Common myeloid progenitor, CD34-positive (primary cell): ENCODE measurements at regions of chr20 and their contacts with region 1.

Region 1: GRCh38 chr20:50980851-50981713 is 22.5 kb downstream of the MOCS3 start:
- DNase-seq: peak; percentile 66 to 77 (median 75)
- H3K4me3 ChIP-seq: peak overlapping the region in 1 of 7 experiments; percentile 57
- H3K27ac ChIP-seq: no peak overlapping the region
- H3K4me1 ChIP-seq: peaks cover 0 to 4% (median 0%) of the 10 kb centered on the region in 4 experiments
- H3K27me3 ChIP-seq: peaks cover 0 to 15% (median 7%) of the 10 kb centered on the region in 5 experiments

Region 2: DNA sequence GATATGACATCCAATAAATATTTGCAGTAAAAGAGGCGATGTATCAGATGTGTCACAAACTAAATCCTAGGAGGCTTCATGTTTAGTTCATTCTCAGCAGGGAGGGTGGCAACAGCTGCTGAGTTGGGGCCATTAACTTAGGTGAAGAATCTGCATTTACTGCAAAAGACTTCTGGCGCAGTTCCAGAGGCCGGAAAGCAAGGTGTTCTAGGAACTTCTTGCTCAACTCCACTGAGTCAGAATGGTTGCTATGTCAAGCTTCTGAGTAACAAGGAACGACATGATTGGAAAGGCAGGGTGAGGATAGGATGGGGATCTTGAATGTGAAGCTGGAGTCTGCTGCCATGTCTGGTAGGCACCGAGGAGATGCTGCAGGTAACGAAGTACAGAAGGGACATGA is 61.5 kb before region 1 on chr20:
- CTCF ChIA-PET with region 1: no interaction called
- POLR2A ChIA-PET with region 1: no interaction called
- DNase-seq: no peak
- H3K4me3 ChIP-seq: no peak overlapping the region
- H3K27ac ChIP-seq: no peak overlapping the region
- H3K4me1 ChIP-seq: peaks cover 5 to 39% (median 13%) of the 10 kb centered on the region in 4 experiments
- H3K27me3 ChIP-seq: no peaks in the 10 kb centered on the region

Region 3: GRCh38 chr20:50967586-50967985 is 13.5 kb before region 1 on chr20:
- CTCF ChIA-PET with region 1: interaction called, 12 read pairs
- POLR2A ChIA-PET with region 1: no interaction called
- DNase-seq: no peak
- H3K4me3 ChIP-seq: no peak overlapping the region
- H3K27ac ChIP-seq: no peak overlapping the region
- H3K4me1 ChIP-seq: no peaks in the 10 kb centered on the region
- H3K27me3 ChIP-seq: peaks cover 0 to 11% (median 4%) of the 10 kb centered on the region in 5 experiments

Region 4: DNA sequence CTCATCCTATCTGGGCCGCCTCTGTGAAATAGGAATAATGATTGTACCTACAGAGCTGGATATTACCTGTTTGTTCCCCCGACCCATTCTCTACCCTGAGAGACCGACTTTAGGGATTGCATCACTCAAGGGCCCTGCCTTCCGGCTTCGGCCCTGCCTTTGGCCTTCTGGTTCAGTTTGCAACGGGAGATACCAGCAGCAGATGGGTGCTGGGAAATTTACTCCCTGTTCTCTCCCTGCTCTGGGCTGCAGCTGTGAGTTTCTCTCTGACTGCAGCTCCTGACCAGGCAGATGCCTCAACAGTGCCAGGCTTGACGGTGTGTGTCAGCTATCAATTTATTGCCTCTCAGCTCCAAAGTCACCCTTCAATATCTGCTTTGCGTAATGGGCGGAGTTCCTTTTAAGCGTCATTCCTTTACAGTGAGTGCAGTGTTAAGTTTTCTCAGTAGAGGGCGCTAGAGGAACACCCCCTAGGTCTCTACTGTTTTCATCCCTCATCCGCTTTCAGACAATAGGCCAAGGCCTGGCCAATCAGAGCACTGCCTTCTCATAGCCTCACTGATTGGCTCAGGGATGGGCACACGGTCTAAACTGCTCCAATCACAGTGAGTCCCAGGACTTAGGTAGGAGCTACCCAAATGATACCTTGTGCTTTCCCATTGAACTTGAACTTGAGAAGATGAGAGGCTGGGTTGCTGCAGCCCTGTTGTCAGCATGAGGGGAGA is 11.8 kb after region 1 on chr20:
- CTCF ChIA-PET with region 1: interaction called, 19 read pairs
- POLR2A ChIA-PET with region 1: no interaction called
- DNase-seq: peak; percentile 71 to 80 (median 80)
- H3K4me3 ChIP-seq: no peak overlapping the region
- H3K27ac ChIP-seq: no peak overlapping the region
- H3K4me1 ChIP-seq: no peaks in the 10 kb centered on the region
- H3K27me3 ChIP-seq: peaks cover 0 to 21% (median 16%) of the 10 kb centered on the region in 5 experiments

Region 5: DNA sequence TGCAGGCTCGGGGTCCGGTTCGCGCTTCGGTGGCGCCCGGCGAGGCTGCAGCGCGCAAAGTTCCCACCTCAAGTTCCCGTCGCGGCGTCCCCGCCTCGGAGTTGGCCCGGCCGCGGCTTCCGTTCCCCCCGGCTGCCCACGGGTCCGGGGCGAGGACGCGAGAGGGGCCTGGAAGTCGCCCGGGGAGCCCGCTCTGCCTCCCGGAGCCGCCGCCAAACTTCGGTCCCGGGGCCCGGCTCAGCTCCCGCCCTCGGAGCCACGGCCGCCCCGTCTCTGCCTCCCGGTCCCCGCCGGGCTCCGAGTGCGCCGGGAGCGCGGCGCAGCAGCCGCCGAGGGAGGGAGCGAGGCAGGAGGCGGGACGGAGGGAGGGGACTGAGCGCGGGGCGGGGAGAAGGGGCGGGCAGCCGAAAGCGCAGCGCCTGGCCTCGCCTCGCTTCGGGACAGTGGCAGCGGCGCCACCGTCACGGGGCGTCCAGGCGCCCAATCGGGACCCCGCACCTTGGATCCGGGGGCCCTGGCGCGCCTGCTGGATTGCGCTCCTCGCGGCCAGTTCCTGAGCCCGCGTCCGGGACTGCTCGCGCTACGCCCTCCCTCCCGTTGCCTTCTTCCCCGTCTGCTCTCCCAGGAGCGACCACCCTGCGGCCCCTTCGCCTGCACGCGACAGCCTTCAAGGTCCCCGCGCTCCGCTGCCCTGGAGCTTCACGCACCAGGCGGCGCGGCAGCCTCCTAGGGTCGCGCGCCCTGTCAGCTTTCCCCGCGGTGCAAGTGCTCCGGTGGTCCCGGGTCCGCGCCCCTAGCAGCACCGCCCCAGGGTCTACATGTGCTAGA is 41.9 kb after region 1 on chr20 and contains the start of gene KCNG1:
- CTCF ChIA-PET with region 1: no interaction called
- POLR2A ChIA-PET with region 1: no interaction called
- DNase-seq: peak; percentile 45 to 69 (median 67)
- H3K4me3 ChIP-seq: peak within 1 kb of the TSS in 5 of 7 experiments; percentile 11 to 59 (median 45)
- H3K27ac ChIP-seq: no peak within 1 kb of the TSS
- H3K4me1 ChIP-seq: peaks cover 0 to 18% (median 9%) of the 10 kb centered on the region in 4 experiments
- H3K27me3 ChIP-seq: peaks cover 13 to 99% (median 41%) of the 10 kb centered on the region in 5 experiments